ENCODE measurements at regions of chr14 and their contacts with region 1.

Region 1: GRCh38 chr14:31456841-31457664 is at the start of gene DTD2:
- DNase-seq: peak; percentile 95
- ATAC-seq: peak; percentile 99
- H3K4me3 ChIP-seq: peak within 1 kb of the TSS; percentile 63 to 87 (median 71)
- H3K4me3 Mint-ChIP-seq: peak within 1 kb of the TSS; percentile 98
- H3K27ac ChIP-seq: peak within 1 kb of the TSS; percentile 72 to 82
- H3K27ac Mint-ChIP-seq: peak within 1 kb of the TSS; percentile 93
- H3K4me1 ChIP-seq: peaks cover 8 to 13% of the 10 kb centered on the region in 2 donors
- H3K4me1 Mint-ChIP-seq: peaks cover 32% of the 10 kb centered on the region
- H3K27me3 ChIP-seq: no peaks in the 10 kb centered on the region
- H3K27me3 Mint-ChIP-seq: no peaks in the 10 kb centered on the region
- CTCF ChIP-seq: no peak
- total RNA-seq, gene DTD2: 12.5 and 14.1 TPM in 2 replicates

Region 2: DNA sequence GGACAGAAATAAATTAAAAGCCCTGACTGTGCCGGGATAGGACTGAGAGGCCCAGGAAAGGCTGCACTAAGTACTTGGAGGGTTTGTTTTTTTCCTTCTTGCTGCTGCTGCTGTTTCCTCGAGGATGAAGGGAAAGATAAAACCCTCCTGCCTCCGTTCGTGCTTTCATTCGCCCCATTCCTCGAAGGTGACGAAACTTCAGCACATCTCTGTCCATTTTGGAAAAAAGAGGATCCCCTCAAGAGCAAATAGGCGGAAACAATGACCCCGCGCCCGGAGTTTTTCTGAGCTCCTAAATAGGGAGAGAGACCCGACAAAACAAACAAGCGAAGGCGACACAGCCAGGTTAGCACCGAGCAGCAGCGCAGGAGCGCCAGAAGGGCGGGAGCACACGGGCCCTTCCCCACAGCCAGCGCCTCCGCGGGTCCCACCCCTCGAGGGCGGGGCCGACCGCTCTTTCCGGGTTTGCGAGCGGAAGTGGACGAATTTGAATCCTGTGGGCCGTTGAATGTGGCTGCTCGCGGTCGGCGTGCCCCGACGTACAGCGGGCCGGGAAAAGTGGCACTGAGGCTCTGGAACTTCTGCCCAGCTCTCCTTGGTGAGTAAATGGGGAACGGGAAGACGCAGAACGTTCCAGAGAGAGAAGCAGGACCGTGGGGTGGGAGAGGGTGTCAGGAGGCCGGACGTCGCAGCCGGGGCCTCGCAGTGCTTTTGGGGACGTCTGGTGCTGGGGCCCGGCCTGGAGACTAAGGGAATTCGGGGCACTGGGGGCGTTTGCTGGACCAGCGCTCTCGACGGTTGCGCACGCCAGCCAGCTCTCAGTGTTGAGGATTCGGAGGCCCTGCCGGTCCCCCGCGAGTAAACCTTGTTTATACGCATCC is 898.1 kb before region 1 on chr14 and contains the start of gene G2E3:
- CTCF ChIA-PET with region 1: no interaction called
- POLR2A ChIA-PET with region 1: no interaction called
- intact Hi-C with region 1: loop called (anchors 10 kb)
- DNase-seq: peak; percentile 90
- ATAC-seq: peak; percentile 99
- H3K4me3 ChIP-seq: peak within 1 kb of the TSS; percentile 87 to 99 (median 95)
- H3K4me3 Mint-ChIP-seq: peak within 1 kb of the TSS; percentile 100
- H3K27ac ChIP-seq: peak within 1 kb of the TSS; percentile 77 to 89
- H3K27ac Mint-ChIP-seq: peak within 1 kb of the TSS; percentile 98
- H3K4me1 ChIP-seq: peaks cover 15 to 17% of the 10 kb centered on the region in 2 donors
- H3K4me1 Mint-ChIP-seq: peaks cover 32% of the 10 kb centered on the region
- H3K27me3 ChIP-seq: no peaks in the 10 kb centered on the region
- H3K27me3 Mint-ChIP-seq: no peaks in the 10 kb centered on the region
- CTCF ChIP-seq: no peak
- total RNA-seq, gene G2E3: 29.2 and 35.4 TPM in 2 replicates

Region 3: DNA sequence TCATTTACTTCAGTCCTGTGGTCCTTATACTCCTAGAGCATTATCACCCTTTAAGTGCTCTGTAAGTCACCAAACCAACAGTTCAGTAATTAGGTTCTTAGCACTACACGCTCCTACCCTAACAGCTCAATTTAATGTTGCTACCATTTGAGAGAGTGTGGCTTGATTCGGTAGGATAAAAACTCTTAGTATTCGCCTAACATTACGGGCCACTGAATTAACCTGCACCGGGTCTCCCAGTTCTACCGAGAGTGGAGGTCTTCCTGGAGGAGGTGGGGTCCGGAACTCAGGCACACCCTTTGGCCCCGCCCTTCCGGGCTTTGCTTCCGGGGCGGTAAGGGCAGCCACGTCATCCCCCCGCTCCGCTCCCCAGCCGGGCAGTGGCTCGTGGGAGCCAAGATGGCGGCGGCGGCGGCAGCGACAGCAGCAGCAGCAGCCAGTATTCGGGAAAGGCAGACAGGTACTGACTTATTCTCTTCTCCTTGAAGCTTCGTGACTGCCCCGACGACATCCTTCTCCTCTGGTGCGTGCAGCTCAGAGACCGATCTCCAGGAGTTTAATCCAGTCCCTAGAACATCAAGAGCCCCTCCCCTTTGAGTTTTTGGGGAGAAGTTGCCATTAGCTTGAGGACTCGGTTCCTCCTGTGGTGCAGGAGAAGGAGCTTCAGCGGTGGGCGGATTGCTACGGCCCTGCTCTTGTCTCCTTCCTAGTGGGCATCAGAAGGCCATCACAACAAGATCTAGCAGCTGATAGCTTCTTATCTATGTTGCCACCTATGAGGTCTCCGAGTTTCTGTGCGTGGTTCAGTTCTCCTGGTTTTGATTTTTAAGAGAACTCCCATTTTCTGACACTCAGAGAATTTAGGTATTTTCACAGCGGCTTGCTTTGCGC is 834.9 kb before region 1 on chr14 and contains the start of gene SCFD1:
- CTCF ChIA-PET with region 1: no interaction called
- POLR2A ChIA-PET with region 1: no interaction called
- intact Hi-C with region 1: loop called (anchors 1 kb)
- DNase-seq: peak; percentile 94
- ATAC-seq: peak; percentile 98
- H3K4me3 ChIP-seq: peak within 1 kb of the TSS; percentile 78 to 98 (median 88)
- H3K4me3 Mint-ChIP-seq: peak within 1 kb of the TSS; percentile 98
- H3K27ac ChIP-seq: peak within 1 kb of the TSS; percentile 82 to 94
- H3K27ac Mint-ChIP-seq: peak within 1 kb of the TSS; percentile 98
- H3K4me1 ChIP-seq: peaks cover 14 to 28% of the 10 kb centered on the region in 2 donors
- H3K4me1 Mint-ChIP-seq: peaks cover 47% of the 10 kb centered on the region
- H3K27me3 ChIP-seq: no peaks in the 10 kb centered on the region
- H3K27me3 Mint-ChIP-seq: no peaks in the 10 kb centered on the region
- CTCF ChIP-seq: no peak
- total RNA-seq, gene SCFD1: 73.0 and 79.0 TPM in 2 replicates

Region 4: DNA sequence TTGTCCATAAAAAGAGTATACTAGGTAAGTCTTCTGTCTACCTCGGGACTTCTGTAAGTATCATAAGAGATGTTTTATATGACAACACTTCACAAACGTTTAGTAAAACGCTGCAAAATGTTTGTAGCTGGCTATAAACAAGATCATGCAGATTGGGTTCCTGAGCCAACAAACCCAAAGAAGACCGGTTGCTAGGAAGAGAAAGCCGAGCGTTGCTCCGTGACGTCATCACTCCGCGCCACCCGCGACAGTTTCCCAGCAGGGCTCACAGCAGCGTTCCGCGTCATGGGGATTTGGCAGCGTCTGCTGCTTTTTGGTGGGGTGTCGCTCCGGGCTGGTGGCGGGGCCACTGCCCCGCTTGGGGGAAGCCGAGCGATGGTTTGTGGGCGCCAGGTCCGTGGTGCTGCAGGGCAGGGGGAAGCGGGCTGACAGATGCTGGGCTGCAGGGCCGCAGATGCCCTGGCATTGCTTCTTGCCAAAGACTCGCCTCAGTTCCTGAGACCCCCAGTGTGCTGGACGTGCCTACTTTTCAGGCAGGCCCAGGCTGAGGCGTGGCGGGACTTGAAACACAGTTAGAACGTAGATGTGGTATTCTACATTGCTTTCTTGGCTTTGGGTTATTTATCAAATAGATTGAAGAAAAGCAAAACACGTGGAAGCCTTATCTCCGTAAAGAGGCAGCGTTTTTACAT is 104.2 kb after region 1 on chr14 and contains the start of gene NUBPL:
- CTCF ChIA-PET with region 1: no interaction called
- POLR2A ChIA-PET with region 1: no interaction called
- intact Hi-C with region 1: loop called (anchors 1 kb)
- DNase-seq: peak; percentile 98
- ATAC-seq: peak; percentile 96
- H3K4me3 ChIP-seq: peak within 1 kb of the TSS; percentile 67 to 92 (median 84)
- H3K4me3 Mint-ChIP-seq: peak within 1 kb of the TSS; percentile 93
- H3K27ac ChIP-seq: peak within 1 kb of the TSS; percentile 62 to 94
- H3K27ac Mint-ChIP-seq: peak within 1 kb of the TSS; percentile 97
- H3K4me1 ChIP-seq: peaks cover 16 to 17% of the 10 kb centered on the region in 2 donors
- H3K4me1 Mint-ChIP-seq: peaks cover 25% of the 10 kb centered on the region
- H3K27me3 ChIP-seq: peaks cover 0 to 8% (median 3%) of the 10 kb centered on the region in 4 experiments
- H3K27me3 Mint-ChIP-seq: peaks cover 7% of the 10 kb centered on the region
- CTCF ChIP-seq: no peak
- total RNA-seq, gene NUBPL: 14.2 and 15.5 TPM in 2 replicates